Transverse colon (tissue), 4 donors: ENCODE measurements at regions of chr6 and their contacts with region 1.

Region 1: DNA sequence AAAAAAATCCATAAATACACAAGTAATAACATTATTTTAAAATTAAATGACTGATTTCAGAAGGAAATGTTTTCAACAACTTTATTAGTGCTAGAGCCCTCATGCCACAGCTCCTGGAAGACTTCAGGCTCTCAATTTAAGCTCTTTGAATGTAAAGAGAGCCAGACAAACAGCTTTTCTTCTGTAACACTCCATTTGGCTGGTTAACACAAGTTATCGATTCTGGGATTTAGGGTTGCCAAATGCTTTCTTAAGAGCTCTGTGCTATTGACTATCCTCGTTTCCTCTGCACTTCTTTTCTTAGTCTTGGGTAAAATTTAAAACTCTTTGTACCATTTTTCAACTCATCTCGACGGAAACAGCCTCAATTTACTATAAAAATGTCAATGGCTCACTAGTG is 402.5 kb downstream of the PRKN start:
- DNase-seq: no peak
- H3K4me3 ChIP-seq: no peak overlapping the region
- H3K27ac ChIP-seq: no peak overlapping the region
- H3K4me1 ChIP-seq: no peaks in the 10 kb centered on the region
- H3K27me3 ChIP-seq: no peaks in the 10 kb centered on the region
- CTCF ChIP-seq: no peak
- EP300 ChIP-seq: no peak
- POLR2A ChIP-seq: no peak

Region 2: GRCh38 chr6:162099685-162100084 is 225.4 kb before region 1 on chr6:
- in situ Hi-C with region 1: no loop called
- intact Hi-C with region 1: loop called (anchors 5 kb)
- DNase-seq: no peak
- H3K4me3 ChIP-seq: no peak overlapping the region
- H3K27ac ChIP-seq: no peak overlapping the region
- H3K4me1 ChIP-seq: no peaks in the 10 kb centered on the region
- H3K27me3 ChIP-seq: no peaks in the 10 kb centered on the region
- CTCF ChIP-seq: no peak
- EP300 ChIP-seq: no peak
- POLR2A ChIP-seq: no peak